Ascending aorta (tissue), 2 donors: ENCODE measurements at regions of chr6 and their contacts with region 1.

Region 1: GRCh38 chr6:45377554-45378333 is at the start of gene SUPT3H:
- DNase-seq: peak; percentile 72 to 95
- H3K4me3 ChIP-seq: peak within 1 kb of the TSS; percentile 63 to 85
- H3K27ac ChIP-seq: peak within 1 kb of the TSS; percentile 90
- H3K4me1 ChIP-seq: peaks cover 0 to 11% of the 10 kb centered on the region in 2 donors
- H3K27me3 ChIP-seq: no peaks in the 10 kb centered on the region
- CTCF ChIP-seq: peak in 2 of 3 experiments; percentile 20 to 38
- total RNA-seq, gene SUPT3H: not detected

Region 2: GRCh38 chr6:45419571-45420082 is 41.9 kb after region 1 on chr6:
- intact Hi-C with region 1: loop called (anchors 5 kb)
- DNase-seq: peak; percentile 11 to 71
- H3K4me3 ChIP-seq: peak overlapping the region; percentile 26 to 71
- H3K27ac ChIP-seq: no peak overlapping the region
- H3K4me1 ChIP-seq: peaks cover 12 to 28% of the 10 kb centered on the region in 2 donors
- H3K27me3 ChIP-seq: peaks cover 5% of the 10 kb centered on the region
- CTCF ChIP-seq: no peak

Region 3: DNA sequence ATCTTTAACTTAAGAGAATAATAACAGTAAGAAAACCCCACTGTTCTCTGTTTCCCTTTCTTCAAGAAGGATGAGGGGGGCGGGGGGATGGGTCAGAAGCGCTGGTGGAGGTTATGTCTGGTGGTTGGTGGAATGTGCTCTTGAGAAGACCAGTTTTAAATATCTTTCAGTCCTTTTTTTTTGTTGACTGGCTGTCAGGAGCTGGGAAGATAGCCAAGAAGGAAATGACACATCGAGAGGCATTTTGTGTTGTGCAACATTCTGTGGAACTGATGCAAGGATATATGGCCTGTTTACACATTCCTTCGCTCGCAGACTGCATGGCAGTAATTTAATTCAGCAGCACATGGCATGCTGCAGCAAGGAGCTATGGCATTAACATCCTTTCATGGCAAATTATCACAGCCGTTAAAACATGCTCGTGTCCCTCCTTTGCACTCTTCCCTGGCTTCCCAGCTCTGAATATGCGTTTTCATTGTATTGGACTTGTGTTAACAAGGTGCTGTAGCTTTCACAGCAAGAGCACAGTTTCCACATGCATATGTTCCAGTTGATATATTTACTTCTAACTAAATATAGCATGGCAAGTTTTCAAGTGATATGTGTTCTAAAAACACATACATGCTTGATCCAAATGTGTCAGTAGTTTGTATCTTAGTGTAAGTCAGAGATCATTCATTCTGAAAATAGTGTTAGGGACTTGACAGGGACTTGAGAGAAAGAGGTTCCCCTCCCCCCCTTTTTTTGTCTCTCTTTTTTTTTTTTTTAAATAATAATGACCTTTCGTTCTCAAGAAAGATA is 68.2 kb after region 1 on chr6:
- intact Hi-C with region 1: loop called (anchors 2 kb)
- DNase-seq: peak; percentile 28 to 83
- H3K4me3 ChIP-seq: no peak overlapping the region
- H3K27ac ChIP-seq: peak overlapping the region; percentile 31 to 32
- H3K4me1 ChIP-seq: peaks cover 0 to 13% of the 10 kb centered on the region in 2 donors
- H3K27me3 ChIP-seq: no peaks in the 10 kb centered on the region
- CTCF ChIP-seq: no peak

Region 4: GRCh38 chr6:46376562-46377061 is 998.9 kb after region 1 on chr6:
- intact Hi-C with region 1: loop called (anchors 5 kb)
- DNase-seq: no peak
- H3K4me3 ChIP-seq: peak overlapping the region in 1 of 2 donors; percentile 16
- H3K27ac ChIP-seq: peak overlapping the region; percentile 63 to 67
- H3K4me1 ChIP-seq: peaks cover 11 to 62% of the 10 kb centered on the region in 2 donors
- H3K27me3 ChIP-seq: no peaks in the 10 kb centered on the region
- CTCF ChIP-seq: no peak